CD8-positive, alpha-beta T cell (primary cell): ENCODE measurements at regions of chrX and their contacts with region 1.

Region 1: GRCh38 chrX:21374163-21374993 is at the start of gene CNKSR2:
- DNase-seq: peak; percentile 24 to 82 (median 68)
- ATAC-seq: peak; percentile 73
- H3K4me3 ChIP-seq: peak within 1 kb of the TSS; percentile 60 to 65
- H3K4me3 Mint-ChIP-seq: peak within 1 kb of the TSS; percentile 90
- H3K27ac ChIP-seq: peak within 1 kb of the TSS; percentile 50 to 60
- H3K27ac Mint-ChIP-seq: peak within 1 kb of the TSS; percentile 90
- H3K4me1 ChIP-seq: no peaks in the 10 kb centered on the region
- H3K4me1 Mint-ChIP-seq: peaks cover 32% of the 10 kb centered on the region
- H3K27me3 ChIP-seq: no peaks in the 10 kb centered on the region
- H3K27me3 Mint-ChIP-seq: no peaks in the 10 kb centered on the region
- CTCF ChIP-seq: no peak
- total RNA-seq, gene CNKSR2: 11.7 to 14.0 TPM

Region 2: GRCh38 chrX:21438792-21439191 is 64.4 kb after region 1 on chrX:
- CTCF ChIA-PET with region 1: interaction called, 3 read pairs
- POLR2A ChIA-PET with region 1: interaction called, 4 read pairs
- intact Hi-C with region 1: loop called (anchors 2 to 5 kb)
- DNase-seq: peak in 2 of 9 experiments; percentile 13 to 54
- ATAC-seq: peak; percentile 90
- H3K4me3 ChIP-seq: no peak overlapping the region
- H3K4me3 Mint-ChIP-seq: peak overlapping the region; percentile 61
- H3K27ac ChIP-seq: peak overlapping the region in 1 of 2 experiments; percentile 58
- H3K27ac Mint-ChIP-seq: peak overlapping the region; percentile 86
- H3K4me1 ChIP-seq: peaks cover 17% of the 10 kb centered on the region
- H3K4me1 Mint-ChIP-seq: peaks cover 29% of the 10 kb centered on the region
- H3K27me3 ChIP-seq: no peaks in the 10 kb centered on the region
- H3K27me3 Mint-ChIP-seq: no peaks in the 10 kb centered on the region
- CTCF ChIP-seq: no peak

Region 3: GRCh38 chrX:21479695-21480270 is 105.4 kb after region 1 on chrX:
- CTCF ChIA-PET with region 1: no interaction called
- POLR2A ChIA-PET with region 1: no interaction called
- intact Hi-C with region 1: loop called in 1 of 2 experiments (anchors 5 kb)
- DNase-seq: peak in 2 of 9 experiments; percentile 44 to 57
- ATAC-seq: peak; percentile 52
- H3K4me3 ChIP-seq: no peak overlapping the region
- H3K4me3 Mint-ChIP-seq: no peak overlapping the region
- H3K27ac ChIP-seq: no peak overlapping the region
- H3K27ac Mint-ChIP-seq: no peak overlapping the region
- H3K4me1 ChIP-seq: peaks cover 3% of the 10 kb centered on the region
- H3K4me1 Mint-ChIP-seq: peaks cover 10% of the 10 kb centered on the region
- H3K27me3 ChIP-seq: no peaks in the 10 kb centered on the region
- H3K27me3 Mint-ChIP-seq: no peaks in the 10 kb centered on the region
- CTCF ChIP-seq: peak; percentile 58

Region 4: DNA sequence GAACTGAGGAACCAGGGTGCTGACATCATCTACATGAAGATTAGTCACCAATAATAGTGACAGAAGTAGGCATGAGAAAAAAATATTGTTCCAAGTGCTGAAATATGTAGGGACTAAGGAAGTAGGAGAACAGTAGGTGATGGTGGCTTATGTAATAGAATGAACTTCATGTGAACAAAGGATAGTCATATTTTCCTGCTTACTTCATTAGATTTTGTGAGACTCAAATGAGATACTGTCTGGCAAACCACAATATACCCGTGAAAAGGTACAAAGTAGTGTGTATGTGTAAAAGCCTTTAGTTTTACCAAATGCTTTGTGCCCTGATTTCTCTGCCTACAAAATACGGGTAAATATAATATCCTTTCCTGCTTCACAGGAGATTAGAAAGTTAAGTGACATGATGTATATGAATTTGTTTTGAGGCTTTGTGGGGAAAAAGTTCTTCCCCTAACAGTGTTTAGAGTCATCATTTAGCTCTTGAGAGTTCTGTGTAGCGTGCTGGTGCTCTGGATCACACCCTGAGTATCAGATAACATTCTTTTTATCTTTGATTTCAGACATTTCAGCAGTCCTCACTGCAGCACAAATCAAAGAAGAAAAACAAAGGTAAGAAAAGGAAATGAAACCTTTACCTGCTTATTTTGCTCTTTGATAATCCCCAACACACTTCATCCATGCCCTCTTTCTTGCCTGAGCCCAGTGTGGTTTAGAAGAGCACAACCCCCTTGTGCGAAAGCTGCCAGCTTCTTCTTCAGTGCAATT is 215.8 kb after region 1 on chrX:
- CTCF ChIA-PET with region 1: no interaction called
- POLR2A ChIA-PET with region 1: no interaction called
- intact Hi-C with region 1: loop called in 1 of 2 experiments (anchors 10 kb)
- DNase-seq: peak in 3 of 9 experiments; percentile 14 to 47 (median 21)
- ATAC-seq: peak; percentile 84
- H3K4me3 ChIP-seq: no peak overlapping the region
- H3K4me3 Mint-ChIP-seq: peak overlapping the region; percentile 16
- H3K27ac ChIP-seq: peak overlapping the region in 1 of 2 experiments; percentile 36
- H3K27ac Mint-ChIP-seq: peak overlapping the region; percentile 89
- H3K4me1 ChIP-seq: peaks cover 12% of the 10 kb centered on the region
- H3K4me1 Mint-ChIP-seq: peaks cover 17% of the 10 kb centered on the region
- H3K27me3 ChIP-seq: no peaks in the 10 kb centered on the region
- H3K27me3 Mint-ChIP-seq: no peaks in the 10 kb centered on the region
- CTCF ChIP-seq: no peak

Region 5: GRCh38 chrX:21839334-21840192 is 465.2 kb after region 1 on chrX and contains the start of gene MBTPS2:
- CTCF ChIA-PET with region 1: no interaction called
- POLR2A ChIA-PET with region 1: no interaction called
- intact Hi-C with region 1: loop called (anchors 2 to 10 kb)
- DNase-seq: peak; percentile 61 to 89 (median 79)
- ATAC-seq: peak; percentile 93
- H3K4me3 ChIP-seq: peak within 1 kb of the TSS; percentile 78 to 80
- H3K4me3 Mint-ChIP-seq: peak within 1 kb of the TSS; percentile 89
- H3K27ac ChIP-seq: peak within 1 kb of the TSS; percentile 65 to 75
- H3K27ac Mint-ChIP-seq: peak within 1 kb of the TSS; percentile 94
- H3K4me1 ChIP-seq: no peaks in the 10 kb centered on the region
- H3K4me1 Mint-ChIP-seq: peaks cover 7% of the 10 kb centered on the region
- H3K27me3 ChIP-seq: no peaks in the 10 kb centered on the region
- H3K27me3 Mint-ChIP-seq: no peaks in the 10 kb centered on the region
- CTCF ChIP-seq: no peak
- total RNA-seq, gene MBTPS2: 2.5 to 2.8 TPM

Region 6: DNA sequence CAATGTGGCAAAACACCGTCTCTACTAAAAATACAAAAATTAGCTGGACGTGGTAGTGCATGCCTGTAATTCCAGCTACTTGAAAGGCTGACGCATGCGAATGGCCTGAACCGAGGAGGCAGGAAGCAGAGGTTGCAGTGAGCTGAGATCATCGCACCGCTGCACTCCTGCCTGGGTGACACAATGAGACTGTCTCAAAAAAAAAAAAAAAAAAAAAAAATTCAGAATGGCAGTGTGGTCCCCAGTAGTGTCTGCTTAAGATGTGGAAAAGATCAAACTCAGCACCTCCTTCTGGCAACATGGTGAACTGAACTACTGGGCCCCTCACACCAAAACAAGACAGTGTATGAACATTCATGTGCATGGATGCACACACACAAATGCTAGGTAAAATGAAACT is 598.3 kb after region 1 on chrX:
- CTCF ChIA-PET with region 1: no interaction called
- POLR2A ChIA-PET with region 1: no interaction called
- intact Hi-C with region 1: loop called in 1 of 2 experiments (anchors 10 kb)
- DNase-seq: peak in 8 of 9 experiments; percentile 2 to 74 (median 37)
- ATAC-seq: peak; percentile 95
- H3K4me3 ChIP-seq: no peak overlapping the region
- H3K4me3 Mint-ChIP-seq: peak overlapping the region; percentile 57
- H3K27ac ChIP-seq: no peak overlapping the region
- H3K27ac Mint-ChIP-seq: peak overlapping the region; percentile 82
- H3K4me1 ChIP-seq: peaks cover 18% of the 10 kb centered on the region
- H3K4me1 Mint-ChIP-seq: peaks cover 22% of the 10 kb centered on the region
- H3K27me3 ChIP-seq: no peaks in the 10 kb centered on the region
- H3K27me3 Mint-ChIP-seq: no peaks in the 10 kb centered on the region
- CTCF ChIP-seq: no peak